ENCODE measurements at regions of chr1 and their contacts with region 1.

Region 1: GRCh38 chr1:37449936-37450335 is 24.4 kb upstream of the ZC3H12A start:
- DNase-seq: no peak

Region 2: DNA sequence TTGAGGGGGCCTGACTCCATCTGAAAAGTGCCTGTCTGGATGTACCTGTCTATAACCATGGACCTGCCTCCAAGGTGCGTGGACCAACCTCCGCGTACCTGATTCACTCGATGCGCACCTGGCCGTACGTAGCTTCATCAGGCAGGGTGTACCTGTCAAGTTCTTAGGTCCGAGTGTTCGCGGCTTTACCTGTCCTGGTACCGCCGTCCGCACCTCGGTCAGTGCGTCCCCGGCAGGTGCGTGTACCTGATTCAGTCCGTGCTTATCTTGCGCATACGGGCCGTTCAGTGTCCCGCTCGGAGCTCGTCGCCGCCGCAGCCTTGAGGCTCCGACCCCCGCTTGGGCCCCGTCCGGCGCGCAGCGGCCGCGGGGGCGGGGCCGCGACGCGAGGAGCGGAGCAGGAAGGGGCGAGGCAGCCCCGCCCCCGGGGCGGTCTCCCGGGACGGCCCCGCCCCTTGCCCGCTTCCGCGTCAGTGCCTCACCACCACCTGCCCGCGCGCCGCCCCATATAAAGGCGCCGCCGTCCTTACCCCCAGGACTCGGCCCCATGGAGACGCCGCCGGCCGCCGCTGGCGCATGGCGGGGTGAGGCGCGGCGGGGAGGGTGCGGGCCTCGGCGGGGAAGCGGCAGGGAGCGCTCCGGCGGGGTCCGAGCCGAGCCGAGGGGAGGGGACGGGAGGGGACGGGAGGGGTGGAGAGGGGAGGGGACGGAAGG is 24.3 kb after region 1 on chr1 and contains the start of gene ZC3H12A:
- intact Hi-C with region 1: no loop called
- DNase-seq: peak; percentile 95
- total RNA-seq, gene ZC3H12A: 3.3 TPM

Region 3: GRCh38 chr1:37602750-37603694 is 153.1 kb after region 1 on chr1:
- intact Hi-C with region 1: loop called (anchors 10 kb)
- DNase-seq: no peak

Region 4: DNA sequence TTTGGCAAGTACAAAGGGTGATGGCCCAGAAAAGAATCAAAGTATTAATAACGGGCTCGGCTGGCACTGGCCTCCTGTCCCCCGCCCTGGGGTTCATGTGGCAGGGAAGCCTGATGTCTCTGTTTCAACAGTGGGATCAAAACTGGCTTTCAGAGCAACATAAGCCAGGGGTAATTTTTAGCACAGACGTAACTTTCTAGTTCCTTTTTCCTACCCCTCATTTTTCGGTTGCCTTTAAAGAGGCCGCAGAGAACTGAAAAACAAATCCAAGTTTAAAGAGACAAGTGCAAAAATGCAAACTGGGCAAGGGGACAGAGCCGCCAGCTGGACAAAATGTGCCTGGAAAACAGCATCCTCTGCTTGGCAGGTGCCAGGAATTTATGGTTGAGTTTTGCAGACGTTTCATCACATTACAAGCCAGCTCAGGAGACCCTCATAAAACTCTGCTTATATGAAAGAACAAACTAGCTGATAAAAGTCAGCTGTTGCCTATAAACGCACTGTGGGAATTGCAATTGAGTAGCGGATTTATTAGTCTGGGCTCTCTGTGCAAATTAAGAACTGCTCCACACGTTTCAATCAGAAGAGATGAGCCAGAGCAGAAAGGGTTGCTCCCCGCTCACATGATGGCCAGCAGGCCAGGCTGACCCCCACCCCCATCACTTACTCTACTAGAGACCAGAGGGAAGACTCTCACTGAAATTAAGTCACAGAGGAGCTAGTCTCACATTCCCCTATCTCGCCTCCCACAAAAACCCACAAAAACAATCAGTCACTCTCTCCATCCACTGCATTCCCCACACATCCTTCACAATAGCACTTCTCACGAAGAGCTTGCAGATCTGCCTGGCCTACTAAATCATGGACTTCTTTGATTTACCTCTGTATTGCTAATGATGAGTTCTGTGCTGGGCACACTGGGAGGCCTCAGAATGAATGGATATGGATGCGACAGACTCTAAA is 226.6 kb after region 1 on chr1:
- intact Hi-C with region 1: loop called (anchors 5 kb)
- DNase-seq: no peak